HepG2 (cell line): ENCODE measurements at regions of chr17 and their contacts with region 1.

Region 1: DNA sequence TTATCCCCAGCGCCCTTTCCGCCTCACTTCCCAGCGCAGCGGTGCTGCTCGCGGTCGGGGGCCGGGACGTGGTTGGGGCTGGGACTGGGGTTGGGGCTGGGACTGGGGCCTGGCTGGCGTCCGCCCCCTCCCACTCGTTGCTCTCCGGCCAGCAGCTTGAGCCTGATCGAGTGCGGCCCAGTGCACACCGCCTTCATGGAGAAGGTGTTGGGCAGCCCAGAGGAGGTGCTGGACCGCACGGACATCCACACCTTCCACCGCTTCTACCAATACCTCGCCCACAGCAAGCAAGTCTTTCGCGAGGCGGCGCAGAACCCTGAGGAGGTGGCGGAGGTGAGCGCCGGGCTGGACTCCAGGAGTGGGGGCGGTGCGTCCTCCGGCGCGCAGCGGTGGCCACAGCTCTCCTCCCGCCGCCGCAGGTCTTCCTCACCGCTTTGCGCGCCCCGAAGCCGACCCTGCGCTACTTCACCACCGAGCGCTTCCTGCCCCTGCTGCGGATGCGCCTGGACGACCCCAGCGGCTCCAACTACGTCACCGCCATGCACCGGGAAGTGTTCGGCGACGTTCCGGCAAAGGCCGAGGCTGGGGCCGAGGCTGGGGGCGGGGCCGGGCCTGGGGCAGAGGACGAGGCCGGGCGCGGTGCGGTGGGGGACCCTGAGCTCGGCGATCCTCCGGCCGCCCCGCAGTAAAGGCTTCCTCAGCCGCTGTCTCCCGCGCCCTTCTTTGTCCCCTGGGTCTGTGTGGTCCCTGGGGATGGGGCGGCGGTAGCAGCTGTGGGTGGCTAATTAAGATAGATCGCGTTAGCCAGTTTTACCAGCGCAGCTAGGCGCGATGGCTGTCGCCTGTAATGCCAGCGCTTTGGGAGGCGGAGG is 1.8 kb downstream of the HSD17B1 start:
- DNase-seq: peak; percentile 86
- ATAC-seq: peak; percentile 81
- H3K4me3 ChIP-seq: peak overlapping the region; percentile 88 to 100 (median 94)
- H3K27ac ChIP-seq: peak overlapping the region; percentile 87
- H3K4me1 ChIP-seq: peaks cover 52% of the 10 kb centered on the region
- H3K27me3 ChIP-seq: no peaks in the 10 kb centered on the region; a peak in 1 of 5 replicates
- CTCF ChIP-seq: peak; percentile 32
- EP300 ChIP-seq: peak in 1 of 2 experiments; percentile 39; a peak in 1 of 4 replicates
- POLR2A ChIP-seq: peak; percentile 81 to 92
- RAD21 ChIP-seq: peak; percentile 46; the same call in 1 of the 2 replicates

Region 2: GRCh38 chr17:42378597-42379594 is 175.6 kb before region 1 on chr17:
- CTCF ChIA-PET with region 1: no interaction called
- POLR2A ChIA-PET with region 1: no interaction called
- in situ Hi-C with region 1: no loop called
- intact Hi-C with region 1: no loop called
- DNase-seq: no peak
- ATAC-seq: peak; percentile 29; the same call in 1 of the 3 replicates
- H3K4me3 ChIP-seq: peak overlapping the region in 2 of 3 experiments; percentile 1 to 2; a peak in 1 of 6 replicates
- H3K27ac ChIP-seq: peak overlapping the region; percentile 21
- H3K4me1 ChIP-seq: peaks cover 64% of the 10 kb centered on the region
- H3K27me3 ChIP-seq: no peaks in the 10 kb centered on the region
- CTCF ChIP-seq: no peak
- EP300 ChIP-seq: no peak
- POLR2A ChIP-seq: no peak
- RAD21 ChIP-seq: no peak

Region 3: DNA sequence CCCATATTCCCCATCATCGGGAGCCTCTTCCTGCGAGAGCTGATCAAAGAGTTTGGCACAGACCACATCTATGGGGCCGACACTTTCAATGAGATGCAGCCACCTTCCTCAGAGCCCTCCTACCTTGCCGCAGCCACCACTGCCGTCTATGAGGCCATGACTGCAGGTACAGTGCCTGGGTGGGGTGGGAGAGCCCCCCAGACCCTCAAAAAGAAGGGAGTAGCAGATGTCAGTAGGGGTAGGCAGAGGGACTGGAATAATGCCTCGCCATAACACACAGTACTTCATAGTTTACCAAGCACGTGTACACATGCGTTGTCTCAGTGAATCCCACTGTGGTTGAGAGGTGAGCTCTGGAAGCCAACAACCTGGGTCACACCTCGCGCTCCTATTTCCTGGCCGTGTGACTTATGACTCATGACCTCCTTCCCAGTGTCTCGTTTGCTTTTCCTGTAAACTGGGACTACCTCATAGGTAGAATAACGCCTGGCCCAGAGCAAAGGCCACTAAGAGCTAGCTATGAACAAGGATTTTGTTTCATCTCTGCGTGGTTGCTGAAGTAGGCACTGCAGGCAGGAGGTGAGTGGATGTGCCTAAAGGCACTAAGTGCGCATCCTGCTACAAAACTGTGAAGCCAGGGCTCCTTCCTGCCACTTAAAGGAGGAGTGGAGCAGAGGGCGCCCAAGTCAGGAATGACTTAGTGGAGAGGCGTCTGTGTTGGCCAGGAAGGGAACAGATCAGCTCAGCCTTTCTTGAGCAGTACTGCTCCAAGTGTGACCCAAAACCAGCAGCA is 13.2 kb before region 1 on chr17:
- CTCF ChIA-PET with region 1: no interaction called
- POLR2A ChIA-PET with region 1: interaction called, 68 read pairs
- in situ Hi-C with region 1: no loop called
- intact Hi-C with region 1: no loop called
- DNase-seq: peak; percentile 94
- ATAC-seq: peak; percentile 48
- H3K4me3 ChIP-seq: no peak overlapping the region; a peak in 1 of 6 replicates
- H3K27ac ChIP-seq: peak overlapping the region; percentile 76
- H3K4me1 ChIP-seq: peaks cover 76% of the 10 kb centered on the region
- H3K27me3 ChIP-seq: no peaks in the 10 kb centered on the region
- CTCF ChIP-seq: no peak
- EP300 ChIP-seq: peak; percentile 26 to 76; a peak in 2 of 4 replicates
- POLR2A ChIP-seq: peak; percentile 63 to 64
- RAD21 ChIP-seq: peak; percentile 9; the same call in 1 of the 2 replicates

Region 4: DNA sequence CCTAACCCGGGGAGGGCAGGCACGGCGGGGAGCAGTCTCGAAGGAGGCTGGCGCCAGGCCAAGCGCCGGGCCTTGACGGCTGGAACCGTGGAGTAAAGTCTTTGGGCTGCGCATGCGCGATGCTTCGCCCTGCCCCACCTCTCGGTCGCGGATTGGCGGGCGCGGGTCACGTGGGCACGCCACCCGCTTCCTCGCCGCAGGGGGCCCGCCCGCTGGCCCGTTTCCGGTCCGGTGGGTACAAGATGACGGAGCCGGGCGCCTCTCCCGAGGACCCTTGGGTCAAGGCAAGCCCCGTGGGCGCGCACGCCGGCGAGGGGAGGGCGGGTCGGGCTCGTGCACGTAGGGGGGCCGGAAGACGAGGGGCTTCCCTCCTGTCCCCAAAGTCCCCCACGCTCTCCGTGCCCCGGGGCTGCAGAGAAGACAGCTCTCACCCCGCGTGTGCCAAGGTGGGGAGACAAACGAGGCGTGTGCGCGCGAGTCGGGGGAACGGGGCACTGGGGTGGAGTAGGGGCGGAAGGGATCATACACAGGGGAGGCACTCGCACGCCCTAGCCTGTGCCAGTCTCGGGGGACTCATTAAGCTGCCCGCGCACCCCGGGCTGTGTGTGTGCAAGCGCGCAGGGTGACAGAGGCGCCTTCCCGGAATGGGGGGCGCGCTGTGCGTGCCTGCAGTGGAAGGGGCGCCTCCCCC is 12.5 kb after region 1 on chr17 and contains the start of gene MLX:
- CTCF ChIA-PET with region 1: no interaction called
- POLR2A ChIA-PET with region 1: interaction called, 80 read pairs
- in situ Hi-C with region 1: no loop called
- intact Hi-C with region 1: no loop called
- DNase-seq: peak; percentile 91
- ATAC-seq: peak; percentile 64
- H3K4me3 ChIP-seq: peak within 1 kb of the TSS; percentile 67 to 93 (median 91)
- H3K27ac ChIP-seq: peak within 1 kb of the TSS; percentile 91
- H3K4me1 ChIP-seq: peaks cover 72% of the 10 kb centered on the region
- H3K27me3 ChIP-seq: no peaks in the 10 kb centered on the region; a peak in 1 of 5 replicates
- CTCF ChIP-seq: peak; percentile 48
- EP300 ChIP-seq: no peak; a peak in 2 of 4 replicates
- POLR2A ChIP-seq: peak in 1 of 2 experiments; percentile 60; a peak in 2 of 4 replicates
- RAD21 ChIP-seq: peak; percentile 44
- total RNA-seq, gene MLX: 38.9 and 40.2 TPM in 2 replicates

Region 5: DNA sequence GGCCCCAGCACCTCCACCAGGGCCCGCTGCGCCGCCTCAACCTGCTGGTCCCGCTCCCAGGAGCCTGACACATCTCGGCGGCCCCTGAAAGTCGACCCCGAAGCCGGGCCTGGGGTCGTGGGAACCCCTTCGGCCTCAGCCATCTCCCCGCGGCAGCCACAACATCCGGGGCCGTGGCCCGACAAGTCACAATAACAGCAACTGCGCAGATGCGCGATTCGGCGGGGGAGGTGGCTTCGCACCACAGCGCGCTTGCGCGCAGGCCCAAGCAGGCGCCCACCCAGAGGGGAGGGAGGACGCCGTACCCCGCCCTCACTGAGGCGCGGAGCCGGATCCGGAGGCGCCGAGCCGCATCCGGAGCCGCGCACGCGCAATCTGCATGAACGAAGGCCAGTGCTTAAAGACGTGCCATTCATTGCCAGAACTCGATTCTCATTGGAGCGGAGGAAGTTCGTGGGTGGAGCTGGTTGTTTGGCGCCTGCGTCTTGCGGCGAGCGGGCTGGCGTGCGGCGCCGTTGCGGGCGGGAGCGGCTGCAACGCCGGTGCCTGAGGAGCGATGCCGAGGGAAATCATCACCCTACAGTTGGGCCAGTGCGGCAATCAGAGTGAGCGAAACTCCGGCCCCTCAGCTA is 54.8 kb after region 1 on chr17 and contains the starts of genes RETREG3 and TUBG1:
- CTCF ChIA-PET with region 1: no interaction called
- POLR2A ChIA-PET with region 1: interaction called, 12 read pairs
- in situ Hi-C with region 1: no loop called
- intact Hi-C with region 1: no loop called
- DNase-seq: peak; percentile 99
- ATAC-seq: peak; percentile 89
- H3K4me3 ChIP-seq: peak within 1 kb of the TSS; percentile 75 to 94 (median 91)
- H3K27ac ChIP-seq: peak within 1 kb of the TSS; percentile 89
- H3K4me1 ChIP-seq: peaks cover 59% of the 10 kb centered on the region
- H3K27me3 ChIP-seq: no peaks in the 10 kb centered on the region; a peak in 1 of 5 replicates
- CTCF ChIP-seq: peak; percentile 45
- EP300 ChIP-seq: no peak
- POLR2A ChIP-seq: peak; percentile 93 to 95
- RAD21 ChIP-seq: peak; percentile 81
- total RNA-seq, gene RETREG3: 38.2 and 55.8 TPM in 2 replicates
- total RNA-seq, gene TUBG1: 137 TPM in 2 replicates